ENCODE measurements at regions of chr20 and their contacts with region 1.

Region 1: GRCh38 chr20:21719592-21720214 is 14.2 kb downstream of the PAX1 start:
- DNase-seq: no peak
- ATAC-seq: no peak

Region 2: GRCh38 chr20:22106308-22106938 is 386.7 kb after region 1 on chr20:
- intact Hi-C with region 1: loop called (anchors 10 kb)
- DNase-seq: no peak
- ATAC-seq: no peak

Region 3: GRCh38 chr20:22684072-22684762 is 964.5 kb after region 1 on chr20:
- intact Hi-C with region 1: loop called (anchors 10 kb)
- DNase-seq: no peak
- ATAC-seq: peak; percentile 79